ENCODE measurements at regions of chr12 and their contacts with region 1.

Region 1: DNA sequence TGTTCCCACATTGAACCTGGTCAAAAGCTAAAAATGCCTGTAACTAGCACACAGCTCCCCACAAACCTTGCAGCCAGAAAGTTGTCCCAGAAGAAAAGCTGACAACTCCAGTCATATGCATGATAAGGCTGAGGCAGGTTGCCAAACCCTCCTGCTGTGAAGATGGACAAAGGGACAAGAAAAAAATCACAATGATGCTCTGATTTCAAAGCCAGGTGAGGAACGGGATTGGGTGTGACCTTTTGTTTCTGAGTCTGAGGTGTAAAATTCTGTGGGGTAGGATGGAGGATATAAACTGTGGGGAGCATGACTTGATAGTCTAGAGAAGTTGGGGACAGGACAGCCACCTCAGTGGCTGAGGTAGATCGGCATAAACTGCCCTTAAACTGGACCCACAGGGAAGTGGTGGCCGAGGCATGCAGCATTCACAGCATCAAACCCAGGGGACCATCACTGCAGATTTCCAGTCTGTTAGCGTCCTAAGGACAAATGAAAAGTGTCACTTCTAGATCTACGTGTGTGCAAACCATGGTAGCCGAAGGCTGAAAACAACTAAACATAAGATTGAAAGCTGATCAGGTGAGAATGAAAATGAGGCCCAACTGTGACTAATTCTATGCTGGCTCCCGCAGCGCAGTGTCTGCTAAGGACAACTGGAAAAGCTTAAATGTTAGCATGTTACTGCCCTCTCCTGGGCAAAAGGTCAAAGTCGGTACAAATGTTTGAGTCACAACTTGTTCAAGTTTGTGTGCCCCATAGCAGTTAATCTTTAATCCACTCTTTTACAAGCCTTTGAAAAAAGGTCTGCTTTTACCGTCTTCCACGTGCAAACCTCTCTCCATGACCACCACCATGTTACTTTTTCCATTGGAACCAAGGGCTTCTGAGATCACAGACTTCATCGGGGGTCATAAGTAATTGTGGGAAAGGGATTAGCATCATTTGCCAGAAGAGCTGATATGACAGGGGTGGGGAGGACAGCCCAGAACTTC is 39.8 kb downstream of the GRIN2B start:
- DNase-seq: peak; percentile 87 to 96
- ATAC-seq: peak; percentile 95 to 96
- H3K4me3 ChIP-seq: no peak overlapping the region
- H3K27ac ChIP-seq: peak overlapping the region; percentile 75 to 85
- H3K4me1 ChIP-seq: peaks cover 51% of the 10 kb centered on the region
- CTCF ChIP-seq: peak; percentile 82
- EP300 ChIP-seq: no peak
- POLR2A ChIP-seq: no peak
- RAD21 ChIP-seq: peak; percentile 88 to 93

Region 2: GRCh38 chr12:13233830-13234641 is 707.5 kb before region 1 on chr12:
- CTCF ChIA-PET with region 1: no interaction called
- POLR2A ChIA-PET with region 1: no interaction called
- DNase-seq: peak; percentile 72 to 73
- ATAC-seq: peak; percentile 80 to 91
- H3K4me3 ChIP-seq: no peak overlapping the region
- H3K27ac ChIP-seq: 0 out of 6 replicates have a peak overlapping the region, but pooled peaks of 1 of the 2 experiments have one; percentile 8
- H3K4me1 ChIP-seq: no peaks in the 10 kb centered on the region
- CTCF ChIP-seq: peak; percentile 84
- EP300 ChIP-seq: no peak
- POLR2A ChIP-seq: no peak
- RAD21 ChIP-seq: peak; percentile 82 to 96

Region 3: GRCh38 chr12:13278249-13278787 is 663.2 kb before region 1 on chr12:
- CTCF ChIA-PET with region 1: interaction called, 11 read pairs
- POLR2A ChIA-PET with region 1: no interaction called
- DNase-seq: peak; percentile 69 to 82
- ATAC-seq: peak; percentile 94 to 98
- H3K4me3 ChIP-seq: no peak overlapping the region
- H3K27ac ChIP-seq: peak overlapping the region; percentile 40 to 47; a peak in 3 of 6 replicates
- H3K4me1 ChIP-seq: no peaks in the 10 kb centered on the region
- CTCF ChIP-seq: peak; percentile 95
- EP300 ChIP-seq: no peak
- POLR2A ChIP-seq: no peak
- RAD21 ChIP-seq: peak; percentile 90 to 93

Region 4: GRCh38 chr12:13740150-13740547 is 201.4 kb before region 1 on chr12:
- CTCF ChIA-PET with region 1: interaction called, 17 read pairs
- POLR2A ChIA-PET with region 1: no interaction called
- DNase-seq: no peak
- ATAC-seq: peak in 1 of 2 experiments; percentile 8; a peak in 2 of 6 replicates
- H3K4me3 ChIP-seq: no peak overlapping the region
- H3K27ac ChIP-seq: peak overlapping the region in 1 of 2 experiments; percentile 42; a peak in 2 of 6 replicates
- H3K4me1 ChIP-seq: peaks cover 18% of the 10 kb centered on the region; the same call in 2 of the 3 replicates
- CTCF ChIP-seq: no peak
- EP300 ChIP-seq: no peak
- POLR2A ChIP-seq: no peak
- RAD21 ChIP-seq: no peak

Region 5: GRCh38 chr12:13777374-13777773 is 164.2 kb before region 1 on chr12:
- CTCF ChIA-PET with region 1: no interaction called
- POLR2A ChIA-PET with region 1: no interaction called
- DNase-seq: no peak
- ATAC-seq: no peak
- H3K4me3 ChIP-seq: no peak overlapping the region
- H3K27ac ChIP-seq: no peak overlapping the region
- H3K4me1 ChIP-seq: no peaks in the 10 kb centered on the region
- CTCF ChIP-seq: no peak
- EP300 ChIP-seq: no peak
- POLR2A ChIP-seq: no peak
- RAD21 ChIP-seq: no peak

Region 6: GRCh38 chr12:13811061-13811460 is 130.5 kb before region 1 on chr12:
- CTCF ChIA-PET with region 1: no interaction called
- POLR2A ChIA-PET with region 1: no interaction called
- DNase-seq: no peak
- ATAC-seq: no peak
- H3K4me3 ChIP-seq: no peak overlapping the region
- H3K27ac ChIP-seq: no peak overlapping the region
- H3K4me1 ChIP-seq: peaks cover 11% of the 10 kb centered on the region; the same call in 2 of the 3 replicates
- CTCF ChIP-seq: no peak
- EP300 ChIP-seq: no peak
- POLR2A ChIP-seq: no peak
- RAD21 ChIP-seq: no peak

Region 7: DNA sequence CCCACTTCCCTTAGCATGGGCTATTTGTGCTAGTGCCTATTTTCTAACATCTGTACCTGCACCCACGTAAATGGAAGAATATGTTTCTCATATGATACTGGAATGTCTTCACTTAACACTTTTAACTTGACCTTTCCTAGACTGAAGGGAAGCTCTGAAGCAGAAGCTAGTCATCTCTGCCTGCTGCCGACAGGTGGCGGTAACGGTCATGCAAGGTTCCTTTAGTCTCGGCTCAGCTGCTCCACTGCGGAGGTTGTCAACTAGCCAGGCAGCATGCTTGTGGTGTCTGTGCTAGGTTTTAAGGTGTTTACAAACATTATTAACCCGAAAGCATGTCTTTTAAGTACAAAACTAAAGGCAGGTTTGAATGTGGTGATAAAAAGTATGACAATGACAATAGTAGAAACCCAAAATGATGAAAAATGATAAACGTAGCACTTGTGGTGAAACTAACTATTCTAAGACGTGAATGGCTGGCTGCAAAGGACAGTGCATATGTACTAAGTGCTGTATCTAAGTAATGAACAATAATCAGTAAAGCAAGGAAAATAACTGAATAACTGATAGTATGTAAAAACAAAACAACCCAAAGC is 77.4 kb before region 1 on chr12:
- CTCF ChIA-PET with region 1: interaction called, 36 read pairs
- POLR2A ChIA-PET with region 1: no interaction called
- DNase-seq: peak; percentile 65 to 88
- ATAC-seq: peak; percentile 96 to 97
- H3K4me3 ChIP-seq: no peak overlapping the region
- H3K27ac ChIP-seq: no peak overlapping the region
- H3K4me1 ChIP-seq: peaks cover 19% of the 10 kb centered on the region
- CTCF ChIP-seq: peak; percentile 90
- EP300 ChIP-seq: no peak
- POLR2A ChIP-seq: no peak
- RAD21 ChIP-seq: peak; percentile 82 to 90

Region 8: GRCh38 chr12:13918897-13919296 is 22.7 kb before region 1 on chr12:
- CTCF ChIA-PET with region 1: interaction called, 13 read pairs
- POLR2A ChIA-PET with region 1: no interaction called
- DNase-seq: no peak
- ATAC-seq: no peak
- H3K4me3 ChIP-seq: no peak overlapping the region
- H3K27ac ChIP-seq: no peak overlapping the region
- H3K4me1 ChIP-seq: peaks cover 30% of the 10 kb centered on the region
- CTCF ChIP-seq: no peak
- EP300 ChIP-seq: no peak
- POLR2A ChIP-seq: no peak
- RAD21 ChIP-seq: no peak

Region 9: GRCh38 chr12:13959131-13959723 is 17.7 kb after region 1 on chr12:
- CTCF ChIA-PET with region 1: interaction called, 8 read pairs
- POLR2A ChIA-PET with region 1: interaction called, 15 read pairs
- DNase-seq: peak in 1 of 2 experiments; percentile 50
- ATAC-seq: peak in 1 of 2 experiments; percentile 42; a peak in 3 of 6 replicates
- H3K4me3 ChIP-seq: peak overlapping the region; percentile 9; the same call in 1 of the 3 replicates
- H3K27ac ChIP-seq: peak overlapping the region; percentile 38 to 92; a peak in 5 of 6 replicates
- H3K4me1 ChIP-seq: peaks cover 57% of the 10 kb centered on the region
- CTCF ChIP-seq: no peak
- EP300 ChIP-seq: no peak
- POLR2A ChIP-seq: no peak
- RAD21 ChIP-seq: no peak

Region 10: GRCh38 chr12:13981990-13982389 is 40.4 kb after region 1 on chr12:
- CTCF ChIA-PET with region 1: interaction called, 18 read pairs
- POLR2A ChIA-PET with region 1: no interaction called
- DNase-seq: peak; percentile 55 to 81
- ATAC-seq: peak; percentile 84 to 87
- H3K4me3 ChIP-seq: peak overlapping the region; percentile 61
- H3K27ac ChIP-seq: peak overlapping the region; percentile 76 to 89
- H3K4me1 ChIP-seq: peaks cover 16% of the 10 kb centered on the region; the same call in 2 of the 3 replicates
- CTCF ChIP-seq: peak; percentile 83
- EP300 ChIP-seq: no peak
- POLR2A ChIP-seq: no peak
- RAD21 ChIP-seq: peak; percentile 79 to 95

Region 11: GRCh38 chr12:14099994-14100393 is 158.4 kb after region 1 on chr12:
- CTCF ChIA-PET with region 1: no interaction called
- POLR2A ChIA-PET with region 1: no interaction called
- DNase-seq: no peak
- ATAC-seq: no peak
- H3K4me3 ChIP-seq: no peak overlapping the region
- H3K27ac ChIP-seq: no peak overlapping the region
- H3K4me1 ChIP-seq: no peaks in the 10 kb centered on the region
- CTCF ChIP-seq: no peak
- EP300 ChIP-seq: no peak
- POLR2A ChIP-seq: no peak
- RAD21 ChIP-seq: no peak